ENCODE measurements at regions of chr11 and their contacts with region 1.

Region 1: GRCh38 chr11:74639533-74639932 is 47.2 kb downstream of the POLD3 start:
- DNase-seq: no peak
- ATAC-seq: no peak
- H3K4me3 ChIP-seq: no peak overlapping the region
- H3K4me3 Mint-ChIP-seq: no peak overlapping the region
- H3K27ac ChIP-seq: no peak overlapping the region
- H3K27ac Mint-ChIP-seq: no peak overlapping the region
- H3K4me1 ChIP-seq: no peaks in the 10 kb centered on the region
- H3K4me1 Mint-ChIP-seq: no peaks in the 10 kb centered on the region
- H3K27me3 ChIP-seq: no peaks in the 10 kb centered on the region
- H3K27me3 Mint-ChIP-seq: no peaks in the 10 kb centered on the region
- CTCF ChIP-seq: no peak

Region 2: DNA sequence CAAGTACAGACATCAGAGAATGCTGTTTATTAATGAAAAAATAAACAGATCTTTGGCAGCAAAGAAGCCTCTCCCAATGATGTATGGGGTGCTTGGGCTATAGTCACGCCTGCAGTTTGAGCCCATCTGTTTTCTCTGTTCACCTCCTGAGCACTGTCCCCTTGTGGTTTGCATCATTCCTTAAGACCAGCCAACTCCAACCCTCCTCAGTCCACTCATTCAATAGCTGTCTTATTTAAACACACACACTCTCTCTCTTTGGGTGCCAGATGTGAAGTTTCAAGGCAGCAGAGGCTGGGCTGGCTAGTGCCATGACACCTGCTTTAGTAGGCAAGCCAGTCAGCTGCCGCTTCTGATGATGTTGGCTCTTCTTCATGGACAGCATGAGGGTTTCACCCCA is 11.0 kb after region 1 on chr11:
- CTCF ChIA-PET with region 1: interaction called, 3 read pairs
- POLR2A ChIA-PET with region 1: no interaction called
- intact Hi-C with region 1: loop called in 1 of 2 experiments (anchors 2 kb)
- DNase-seq: no peak
- ATAC-seq: no peak
- H3K4me3 ChIP-seq: no peak overlapping the region
- H3K4me3 Mint-ChIP-seq: no peak overlapping the region
- H3K27ac ChIP-seq: no peak overlapping the region
- H3K27ac Mint-ChIP-seq: no peak overlapping the region
- H3K4me1 ChIP-seq: no peaks in the 10 kb centered on the region
- H3K4me1 Mint-ChIP-seq: no peaks in the 10 kb centered on the region
- H3K27me3 ChIP-seq: no peaks in the 10 kb centered on the region
- H3K27me3 Mint-ChIP-seq: no peaks in the 10 kb centered on the region
- CTCF ChIP-seq: no peak

Measured in CD8-positive, alpha-beta T cell (primary cell).